ENCODE measurements at regions of chr1 and their contacts with region 1.

Region 1: GRCh38 chr1:65958561-65959350 is 166.1 kb downstream of the PDE4B start:
- DNase-seq: peak; percentile 30
- H3K4me3 Mint-ChIP-seq: no peak overlapping the region
- H3K27ac Mint-ChIP-seq: no peak overlapping the region
- H3K4me1 Mint-ChIP-seq: peaks cover 23% of the 10 kb centered on the region
- H3K27me3 Mint-ChIP-seq: no peaks in the 10 kb centered on the region
- CTCF ChIP-seq: peak; percentile 75

Region 2: DNA sequence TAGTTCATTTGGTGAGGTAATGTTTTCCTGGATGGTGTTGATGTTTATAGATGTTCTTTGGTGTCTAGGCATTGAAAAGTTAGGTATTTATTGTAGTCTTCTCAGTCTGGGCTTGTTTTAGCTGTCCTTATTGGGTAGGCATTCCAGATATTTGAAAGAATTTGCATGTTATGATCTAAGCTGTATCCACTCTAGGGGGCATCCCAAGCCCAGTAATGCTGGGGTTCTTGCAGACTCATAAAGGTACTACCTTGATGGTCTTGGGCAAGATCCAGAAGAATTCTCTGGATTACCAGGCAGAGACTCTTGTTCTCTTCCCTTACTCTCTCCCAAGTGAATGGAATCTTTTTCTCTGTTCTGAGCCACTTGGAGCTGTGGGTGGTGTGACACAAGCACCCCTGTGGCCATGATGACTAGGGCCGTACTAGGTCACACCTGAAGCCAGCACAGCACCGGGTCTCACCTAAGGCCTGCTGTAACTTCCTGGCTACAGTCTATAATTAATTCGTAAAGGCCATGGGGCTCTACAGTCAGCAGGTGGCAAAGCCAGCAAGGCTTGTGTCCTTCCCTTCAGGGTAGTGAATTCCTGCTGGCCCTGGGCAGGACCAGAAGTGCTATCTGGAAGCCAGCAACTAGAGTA is 240.8 kb before region 1 on chr1:
- CTCF ChIA-PET with region 1: no interaction called
- intact Hi-C with region 1: loop called (anchors 2 kb)
- DNase-seq: peak; percentile 21
- H3K4me3 Mint-ChIP-seq: no peak overlapping the region
- H3K27ac Mint-ChIP-seq: no peak overlapping the region
- H3K4me1 Mint-ChIP-seq: no peaks in the 10 kb centered on the region
- H3K27me3 Mint-ChIP-seq: peaks cover 16% of the 10 kb centered on the region
- CTCF ChIP-seq: no peak

Region 3: DNA sequence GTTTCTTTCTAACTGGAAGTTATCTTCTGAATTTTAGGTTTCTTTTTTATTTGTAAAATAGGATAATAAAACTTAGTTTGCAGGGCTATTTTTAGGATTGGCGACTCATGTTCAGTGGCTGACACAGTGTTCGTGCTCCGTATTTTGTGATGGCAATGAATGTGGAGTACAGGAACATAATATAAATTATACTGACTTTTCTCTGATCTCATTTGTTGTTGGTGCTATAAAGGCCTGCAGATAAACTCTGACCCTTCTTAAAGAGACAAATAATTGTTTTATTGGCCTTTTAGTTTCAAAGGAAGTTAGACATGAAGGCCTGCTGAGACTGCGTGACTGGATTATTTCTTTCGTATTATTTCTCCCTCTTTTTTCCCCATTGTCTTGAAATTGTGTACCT is 173.6 kb after region 1 on chr1:
- CTCF ChIA-PET with region 1: no interaction called
- intact Hi-C with region 1: no loop called
- DNase-seq: no peak
- H3K4me3 Mint-ChIP-seq: no peak overlapping the region
- H3K27ac Mint-ChIP-seq: no peak overlapping the region
- H3K4me1 Mint-ChIP-seq: no peaks in the 10 kb centered on the region
- H3K27me3 Mint-ChIP-seq: no peaks in the 10 kb centered on the region
- CTCF ChIP-seq: no peak

Region 4: GRCh38 chr1:66242646-66243547 is 284.1 kb after region 1 on chr1:
- CTCF ChIA-PET with region 1: interaction called, 26 read pairs
- intact Hi-C with region 1: loop called (anchors 1 kb)
- DNase-seq: peak; percentile 86
- H3K4me3 Mint-ChIP-seq: no peak overlapping the region
- H3K27ac Mint-ChIP-seq: no peak overlapping the region
- H3K4me1 Mint-ChIP-seq: peaks cover 8% of the 10 kb centered on the region
- H3K27me3 Mint-ChIP-seq: no peaks in the 10 kb centered on the region
- CTCF ChIP-seq: peak; percentile 96

Region 5: GRCh38 chr1:66271216-66271903 is 312.6 kb after region 1 on chr1:
- CTCF ChIA-PET with region 1: no interaction called
- intact Hi-C with region 1: loop called (anchors 1 kb)
- DNase-seq: peak; percentile 75
- H3K4me3 Mint-ChIP-seq: peak overlapping the region; percentile 38
- H3K27ac Mint-ChIP-seq: peak overlapping the region; percentile 72
- H3K4me1 Mint-ChIP-seq: peaks cover 38% of the 10 kb centered on the region
- H3K27me3 Mint-ChIP-seq: no peaks in the 10 kb centered on the region
- CTCF ChIP-seq: no peak

Region 6: GRCh38 chr1:66446261-66447001 is 487.7 kb after region 1 on chr1:
- CTCF ChIA-PET with region 1: interaction called, 3 read pairs
- intact Hi-C with region 1: loop called (anchors 2 kb)
- DNase-seq: peak; percentile 40
- H3K4me3 Mint-ChIP-seq: no peak overlapping the region
- H3K27ac Mint-ChIP-seq: no peak overlapping the region
- H3K4me1 Mint-ChIP-seq: no peaks in the 10 kb centered on the region
- H3K27me3 Mint-ChIP-seq: no peaks in the 10 kb centered on the region
- CTCF ChIP-seq: peak; percentile 86

Region 7: DNA sequence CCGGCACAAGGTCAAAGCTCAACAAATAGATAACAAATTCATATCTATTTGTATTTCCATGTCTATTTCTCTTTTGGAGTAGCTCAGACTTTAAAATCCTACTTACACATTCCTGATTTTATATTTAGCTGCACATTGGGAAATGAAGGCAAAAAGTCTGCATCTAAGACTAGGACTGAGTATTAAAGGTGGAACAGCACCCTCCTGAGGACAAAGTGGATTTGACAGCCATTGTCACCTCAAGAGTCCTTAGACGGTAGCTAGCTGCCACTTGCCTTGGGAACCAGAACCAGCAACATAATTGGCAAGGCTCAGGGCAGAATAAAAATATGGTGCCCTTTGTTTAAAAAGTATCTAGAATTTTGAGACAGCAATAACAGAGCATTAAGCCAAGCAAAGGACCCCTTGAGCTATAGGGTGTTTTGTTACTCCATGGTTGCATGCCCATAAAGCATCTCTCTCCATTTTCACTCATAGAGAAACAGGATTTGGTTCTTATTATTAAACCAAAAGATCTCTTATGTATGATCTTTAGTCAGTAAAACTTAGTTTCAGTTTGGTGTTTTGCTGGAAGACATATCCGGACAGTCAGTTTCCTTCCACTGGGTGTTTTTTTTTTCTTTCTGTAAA is 545.2 kb after region 1 on chr1:
- CTCF ChIA-PET with region 1: no interaction called
- intact Hi-C with region 1: loop called (anchors 5 kb)
- DNase-seq: peak; percentile 49
- H3K4me3 Mint-ChIP-seq: no peak overlapping the region
- H3K27ac Mint-ChIP-seq: no peak overlapping the region
- H3K4me1 Mint-ChIP-seq: no peaks in the 10 kb centered on the region
- H3K27me3 Mint-ChIP-seq: no peaks in the 10 kb centered on the region
- CTCF ChIP-seq: peak; percentile 31